Ovary (tissue), 10 donors: ENCODE measurements at regions of chr22 and their contacts with region 1.

Region 1: DNA sequence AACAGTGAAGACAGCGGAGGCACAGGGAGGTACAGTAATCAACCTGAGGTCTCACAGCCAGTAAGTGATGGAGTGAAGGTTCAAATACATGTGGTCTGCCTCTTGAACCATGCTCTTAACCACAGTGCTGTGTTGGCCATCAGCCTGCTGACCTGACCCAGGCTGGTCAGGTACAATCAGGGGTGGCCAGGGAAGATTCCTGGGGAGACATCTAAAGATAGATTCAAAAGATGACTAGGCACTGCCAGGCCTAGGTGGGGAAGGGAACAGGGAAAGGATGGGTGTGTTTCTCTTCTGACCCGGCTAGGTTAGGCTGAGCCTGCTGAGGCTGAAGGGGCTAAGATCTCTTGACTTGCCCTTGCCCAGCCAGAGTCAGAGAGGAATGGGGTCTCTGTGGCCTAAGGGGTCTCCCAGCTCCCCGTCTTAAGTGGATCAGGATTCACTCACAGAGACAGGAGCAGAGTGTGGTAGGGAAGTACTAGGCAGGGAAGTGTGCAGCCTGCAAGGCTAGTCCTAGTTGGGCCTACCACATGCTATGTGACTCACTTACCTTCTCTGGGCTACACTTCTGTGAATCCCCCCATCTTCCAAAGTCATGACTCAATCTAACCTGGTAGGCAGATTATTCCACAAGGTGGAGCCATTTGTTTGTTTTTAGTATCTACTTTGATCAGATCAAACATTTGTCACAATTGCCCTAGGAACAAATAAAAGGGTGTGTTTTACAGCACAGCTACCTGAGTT is 10.4 kb upstream of the SREBF2 start:
- DNase-seq: no peak
- H3K4me3 ChIP-seq: no peak overlapping the region
- H3K27ac ChIP-seq: no peak overlapping the region
- H3K4me1 ChIP-seq: peaks cover 15% of the 10 kb centered on the region
- H3K27me3 ChIP-seq: no peaks in the 10 kb centered on the region
- CTCF ChIP-seq: peak in 2 of 3 donors; percentile 37 to 42
- EP300 ChIP-seq: no peak
- POLR2A ChIP-seq: no peak

Region 2: DNA sequence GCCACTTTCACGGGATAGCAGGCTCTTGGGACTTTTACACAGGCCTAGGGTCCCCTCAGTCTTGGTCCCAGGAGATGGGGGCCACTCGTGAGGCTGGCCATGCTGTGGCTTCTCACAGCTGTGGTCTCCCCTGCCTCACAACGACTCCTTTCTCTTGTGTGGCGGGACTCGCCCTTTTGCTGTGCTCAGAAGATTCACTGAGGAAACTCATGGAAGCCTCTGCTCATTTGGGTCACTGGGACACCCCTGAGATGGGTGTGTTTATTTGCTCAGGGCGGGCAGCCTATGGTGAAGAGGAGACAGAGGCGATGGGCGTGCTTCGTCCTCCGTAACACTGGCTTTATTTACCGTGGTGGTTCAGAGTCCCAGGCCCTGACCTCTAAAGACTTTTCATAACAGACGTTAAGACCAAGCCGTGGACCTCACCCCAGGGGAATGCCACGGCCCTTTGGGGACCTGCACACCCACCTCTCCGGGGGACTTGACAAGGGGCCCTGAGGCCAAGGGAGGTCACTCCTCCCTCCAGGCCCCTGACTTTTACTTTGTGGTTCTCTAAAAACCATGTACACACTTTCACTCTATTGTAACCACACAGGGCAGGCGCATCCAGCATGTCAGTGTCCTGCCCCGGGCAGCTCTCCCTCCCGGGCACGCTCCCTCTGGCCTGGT is 425.2 kb before region 1 on chr22:
- intact Hi-C with region 1: no loop called
- DNase-seq: no peak
- H3K4me3 ChIP-seq: no peak overlapping the region
- H3K27ac ChIP-seq: no peak overlapping the region
- H3K4me1 ChIP-seq: peaks cover 6% of the 10 kb centered on the region
- H3K27me3 ChIP-seq: no peaks in the 10 kb centered on the region
- CTCF ChIP-seq: no peak
- EP300 ChIP-seq: no peak
- POLR2A ChIP-seq: no peak

Region 3: GRCh38 chr22:41946629-41947423 is 124.3 kb after region 1 on chr22 and contains the start of gene CENPM:
- intact Hi-C with region 1: loop called in 2 of 4 experiments (anchors 10 kb)
- DNase-seq: peak; percentile 84 to 93 (median 89)
- H3K4me3 ChIP-seq: peak within 1 kb of the TSS; percentile 76
- H3K27ac ChIP-seq: no peak within 1 kb of the TSS
- H3K4me1 ChIP-seq: peaks cover 4% of the 10 kb centered on the region
- H3K27me3 ChIP-seq: no peaks in the 10 kb centered on the region
- CTCF ChIP-seq: no peak
- EP300 ChIP-seq: no peak
- POLR2A ChIP-seq: no peak
- total RNA-seq, gene CENPM: 0.25 to 8.0 (median 1.8) TPM in 5 of 7 donors, not detected in the others